ENCODE measurements at regions of chr6 and their contacts with region 1.

Region 1: DNA sequence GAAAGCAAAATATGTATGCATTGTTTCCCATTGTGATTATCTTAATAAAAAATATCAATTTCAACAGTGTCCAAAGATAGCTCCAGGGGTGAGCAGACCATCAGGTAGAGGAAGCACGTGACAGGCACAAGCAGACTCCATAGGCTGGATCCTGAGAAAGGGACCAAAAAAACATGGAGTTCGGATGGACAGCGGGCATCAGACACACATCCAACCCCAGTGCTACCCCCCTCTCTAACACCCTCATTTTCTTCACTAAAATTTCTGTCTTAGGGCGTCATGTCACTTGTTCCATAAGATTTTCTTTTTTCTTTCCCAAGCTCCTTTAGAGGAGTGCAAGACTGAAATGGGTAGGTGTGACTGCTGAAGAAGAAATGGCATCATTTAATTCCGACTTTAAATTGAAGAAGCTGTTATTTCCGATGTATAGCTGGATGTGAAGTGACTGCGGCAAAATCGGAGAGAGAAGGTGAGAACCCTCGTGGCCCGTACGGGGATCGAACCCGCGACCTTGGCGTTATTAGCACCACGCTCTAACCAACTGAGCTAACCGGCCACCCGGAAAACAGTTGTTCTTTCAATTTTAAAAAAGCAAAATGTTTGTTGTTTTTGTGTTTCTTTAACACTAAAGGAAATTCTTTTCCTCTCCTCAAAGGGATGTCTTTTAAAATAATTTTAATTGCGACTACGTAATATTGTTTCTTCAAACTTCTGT is 10.3 kb upstream of the PRSS16 start:
- DNase-seq: peak in 1 of 2 experiments; percentile 87
- H3K4me3 ChIP-seq: peak overlapping the region; percentile 75 to 93 (median 90)
- H3K27ac ChIP-seq: no peak overlapping the region
- H3K4me1 ChIP-seq: peaks cover 0 to 4% (median 0%) of the 10 kb centered on the region in 4 experiments; a peak in 1 of 7 replicates
- H3K27me3 ChIP-seq: peaks cover 0 to 11% (median 7%) of the 10 kb centered on the region in 4 experiments; a peak in 5 of 7 replicates
- CTCF ChIP-seq: no peak
- EP300 ChIP-seq: no peak
- POLR2A ChIP-seq: no peak
- RAD21 ChIP-seq: no peak

Region 2: DNA sequence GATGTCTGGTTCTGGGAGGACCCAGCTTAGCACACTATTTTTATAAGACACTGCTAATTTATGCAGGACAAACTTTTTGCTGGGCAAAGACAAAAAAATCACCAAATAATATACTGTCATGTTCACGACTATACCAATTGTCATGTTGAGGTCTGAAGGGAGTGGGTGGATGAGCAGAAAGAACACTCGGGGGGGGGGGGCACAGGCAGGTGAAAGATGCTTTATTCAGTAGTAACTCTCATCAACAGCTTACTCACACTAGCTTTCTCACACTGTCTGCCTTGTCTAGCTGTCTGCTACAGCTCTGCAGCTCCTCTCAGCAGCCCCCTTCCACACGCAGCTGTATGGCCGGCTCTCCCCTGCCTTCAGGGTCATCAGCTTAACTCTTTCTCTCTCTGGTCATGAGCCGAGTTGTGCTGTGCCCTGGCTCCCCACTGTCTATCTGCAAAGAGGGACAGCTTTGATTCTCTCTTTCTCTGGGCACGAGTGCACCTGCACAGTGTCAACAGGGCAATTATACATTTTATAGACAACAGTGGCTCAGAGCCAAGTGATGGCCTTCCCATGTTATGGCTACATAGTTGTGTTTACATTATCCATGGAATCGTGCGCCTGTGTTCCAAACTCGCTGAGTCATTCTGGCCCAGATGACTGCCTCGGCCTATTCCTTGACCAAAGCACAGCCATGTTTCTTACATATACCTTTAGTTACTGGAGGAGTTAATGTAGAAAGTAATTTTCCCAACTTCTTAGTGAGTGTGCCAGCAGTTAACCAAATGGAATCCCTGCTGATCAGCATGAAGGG is 177.4 kb before region 1 on chr6:
- CTCF ChIA-PET with region 1: no interaction called
- POLR2A ChIA-PET with region 1: no interaction called
- DNase-seq: no peak
- H3K4me3 ChIP-seq: no peak overlapping the region
- H3K27ac ChIP-seq: no peak overlapping the region
- H3K4me1 ChIP-seq: peaks cover 0 to 3% (median 0%) of the 10 kb centered on the region in 4 experiments; a peak in 1 of 7 replicates
- H3K27me3 ChIP-seq: no peaks in the 10 kb centered on the region
- CTCF ChIP-seq: no peak
- EP300 ChIP-seq: no peak
- POLR2A ChIP-seq: no peak
- RAD21 ChIP-seq: no peak

Region 3: GRCh38 chr6:27251606-27252251 is 14.5 kb after region 1 on chr6:
- CTCF ChIA-PET with region 1: interaction called, 6 read pairs
- POLR2A ChIA-PET with region 1: interaction called, 15 read pairs
- DNase-seq: peak; percentile 92 to 93
- H3K4me3 ChIP-seq: peak overlapping the region; percentile 70 to 95 (median 82)
- H3K27ac ChIP-seq: peak overlapping the region; percentile 84; the same call in 1 of the 2 replicates
- H3K4me1 ChIP-seq: peaks cover 2 to 8% (median 3%) of the 10 kb centered on the region in 4 experiments; a peak in 4 of 7 replicates
- H3K27me3 ChIP-seq: peaks cover 0 to 5% (median 0%) of the 10 kb centered on the region in 4 experiments; a peak in 4 of 7 replicates
- CTCF ChIP-seq: peak; percentile 60 to 72 (median 66)
- EP300 ChIP-seq: no peak
- POLR2A ChIP-seq: peak; percentile 62 to 71
- RAD21 ChIP-seq: peak; percentile 24 to 35; a peak in 2 of 4 replicates

Region 4: DNA sequence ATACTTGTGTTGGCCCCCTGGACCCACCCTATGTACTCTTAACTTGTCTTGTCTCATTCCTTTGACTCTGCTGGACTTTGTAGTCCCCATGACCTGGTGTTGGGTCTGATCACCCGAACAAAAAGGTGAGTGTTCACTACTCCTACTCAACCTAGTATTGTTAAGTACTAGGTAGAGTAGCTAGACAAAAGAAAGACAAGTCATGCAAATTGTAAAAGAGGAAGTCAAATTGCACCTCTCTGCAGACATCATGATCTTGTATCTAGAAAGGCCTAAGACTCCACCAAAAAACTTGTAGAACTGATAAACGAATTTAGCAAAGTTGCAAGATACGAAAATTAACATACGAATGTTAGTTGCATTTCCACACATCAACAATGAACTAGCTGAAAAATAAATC is 115.6 kb after region 1 on chr6:
- CTCF ChIA-PET with region 1: no interaction called
- POLR2A ChIA-PET with region 1: no interaction called
- DNase-seq: no peak
- H3K4me3 ChIP-seq: no peak overlapping the region
- H3K27ac ChIP-seq: no peak overlapping the region
- H3K4me1 ChIP-seq: no peaks in the 10 kb centered on the region
- H3K27me3 ChIP-seq: no peaks in the 10 kb centered on the region
- CTCF ChIP-seq: no peak
- EP300 ChIP-seq: no peak
- POLR2A ChIP-seq: no peak
- RAD21 ChIP-seq: no peak

Region 5: DNA sequence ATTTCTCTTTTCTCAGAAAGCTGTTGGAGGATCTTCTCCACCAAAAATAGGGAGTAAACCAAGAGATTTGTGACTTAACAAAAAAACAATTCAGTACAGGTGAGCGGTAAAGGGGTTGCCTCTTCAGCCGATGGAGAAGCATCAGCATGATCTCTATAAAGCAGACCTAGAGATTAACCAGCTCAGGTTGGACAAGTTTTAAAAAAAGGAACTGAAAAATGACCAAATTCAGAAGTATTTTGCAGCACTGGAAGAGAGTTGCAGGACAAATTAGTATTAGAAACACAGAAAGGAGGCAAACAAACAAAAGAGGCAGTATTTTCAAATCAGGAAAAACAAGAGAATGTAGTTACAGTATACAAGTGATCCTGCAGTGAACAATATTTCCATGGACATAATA is 275.3 kb after region 1 on chr6:
- CTCF ChIA-PET with region 1: no interaction called
- POLR2A ChIA-PET with region 1: no interaction called
- DNase-seq: no peak
- H3K4me3 ChIP-seq: no peak overlapping the region
- H3K27ac ChIP-seq: no peak overlapping the region
- H3K4me1 ChIP-seq: 0 out of 7 replicates have a peak, but pooled peaks cover 0 to 3% (median 0%) of the 10 kb centered on the region in 4 experiments
- H3K27me3 ChIP-seq: peaks cover 2 to 8% (median 7%) of the 10 kb centered on the region in 4 experiments; a peak in 6 of 7 replicates
- CTCF ChIP-seq: no peak
- EP300 ChIP-seq: no peak
- POLR2A ChIP-seq: no peak
- RAD21 ChIP-seq: no peak

Measured in H1 (cell line).